Left colon (tissue), 2 donors: ENCODE measurements at regions of chr4 and their contacts with region 1.

Region 1: GRCh38 chr4:73653695-73654106 is 33.5 kb upstream of the RASSF6 start:
- DNase-seq: peak; percentile 22 to 46
- ATAC-seq: peak; percentile 87

Region 2: GRCh38 chr4:73311428-73311827 is 342.3 kb before region 1 on chr4:
- intact Hi-C with region 1: loop called in 1 of 2 experiments (anchors 5 kb)
- DNase-seq: no peak
- ATAC-seq: peak; percentile 37

Region 3: GRCh38 chr4:73576381-73576780 is 77.3 kb before region 1 on chr4:
- intact Hi-C with region 1: loop called in 1 of 2 experiments (anchors 5 kb)
- DNase-seq: no peak
- ATAC-seq: no peak